ENCODE measurements at regions of chr1 and their contacts with region 1.

Region 1: DNA sequence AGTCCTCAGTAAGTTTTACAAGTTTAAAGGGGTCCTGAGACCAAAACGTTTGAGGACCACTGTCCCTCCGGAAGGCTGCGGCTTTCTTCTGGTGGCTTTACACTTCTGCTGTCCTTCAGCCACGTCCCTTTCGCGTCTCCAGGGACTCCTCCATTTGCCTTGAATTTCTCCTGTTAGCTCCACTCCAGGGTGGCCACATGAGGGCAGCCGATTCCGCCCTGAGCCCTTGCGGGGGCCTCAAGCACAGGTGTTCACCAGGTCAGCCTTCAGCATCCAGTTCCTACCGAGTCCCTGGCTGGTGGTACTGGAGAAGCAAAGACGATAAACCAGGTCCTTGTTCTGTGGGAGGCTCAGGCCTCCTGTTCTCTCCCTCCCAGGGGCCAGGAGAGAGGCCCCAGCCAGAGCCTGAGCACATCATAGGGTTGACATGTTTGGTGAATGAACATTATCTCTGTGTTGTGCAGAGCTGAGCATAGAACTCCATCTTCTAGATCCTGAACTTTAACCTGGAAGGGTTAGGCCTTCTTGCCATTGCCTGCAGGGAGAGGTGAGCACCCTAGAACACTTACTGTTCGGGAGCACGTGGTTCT is 27.4 kb upstream of the COQ8A start:
- DNase-seq: no peak
- ATAC-seq: peak; percentile 42
- H3K4me3 Mint-ChIP-seq: no peak overlapping the region
- H3K27ac Mint-ChIP-seq: no peak overlapping the region
- H3K4me1 Mint-ChIP-seq: no peaks in the 10 kb centered on the region
- H3K27me3 Mint-ChIP-seq: no peaks in the 10 kb centered on the region
- CTCF ChIP-seq: no peak

Region 2: DNA sequence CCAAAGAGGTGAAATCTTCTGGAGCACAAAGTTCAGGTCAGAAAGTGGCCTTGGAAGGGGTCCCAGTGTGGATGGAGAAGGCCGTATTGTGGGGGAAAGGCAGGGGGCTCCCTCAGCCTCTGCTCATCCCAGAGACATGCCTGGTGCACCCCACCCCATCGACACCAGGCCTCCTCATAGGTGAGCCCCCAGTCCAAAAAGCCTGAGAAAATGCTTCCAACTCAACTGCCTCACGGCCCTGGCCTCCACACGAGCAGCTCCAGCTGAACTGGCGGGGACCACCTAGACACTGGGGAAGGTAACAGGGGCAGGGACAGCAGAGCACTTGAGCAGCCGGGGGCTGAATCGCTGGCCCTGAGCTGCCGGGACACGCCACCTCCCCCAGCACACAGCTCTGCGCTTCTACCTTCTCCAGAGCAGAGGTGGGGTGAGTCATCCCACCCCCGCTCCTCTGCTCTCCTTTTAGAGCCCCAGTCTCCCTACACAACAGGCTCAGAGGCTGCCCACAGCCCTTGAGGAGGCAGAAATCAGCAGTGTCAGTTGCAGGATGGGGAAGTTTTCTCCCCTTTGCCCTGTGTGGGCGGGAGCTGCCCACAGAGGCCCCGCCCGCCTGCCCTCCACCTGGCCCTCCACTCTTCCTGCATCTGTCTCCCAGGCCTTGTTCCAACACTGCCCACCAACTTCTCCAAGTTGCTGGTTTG is 269.7 kb before region 1 on chr1:
- CTCF ChIA-PET with region 1: no interaction called
- POLR2A ChIA-PET with region 1: no interaction called
- intact Hi-C with region 1: no loop called
- DNase-seq: peak; percentile 52
- ATAC-seq: peak; percentile 63
- H3K4me3 Mint-ChIP-seq: peak overlapping the region; percentile 67
- H3K27ac Mint-ChIP-seq: peak overlapping the region; percentile 88
- H3K4me1 Mint-ChIP-seq: peaks cover 76% of the 10 kb centered on the region
- H3K27me3 Mint-ChIP-seq: no peaks in the 10 kb centered on the region
- CTCF ChIP-seq: no peak

Region 3: GRCh38 chr1:226798427-226799411 is 114.0 kb before region 1 on chr1:
- CTCF ChIA-PET with region 1: no interaction called
- POLR2A ChIA-PET with region 1: no interaction called
- intact Hi-C with region 1: no loop called
- DNase-seq: no peak
- ATAC-seq: peak; percentile 81
- H3K4me3 Mint-ChIP-seq: no peak overlapping the region
- H3K27ac Mint-ChIP-seq: peak overlapping the region; percentile 61
- H3K4me1 Mint-ChIP-seq: peaks cover 14% of the 10 kb centered on the region
- H3K27me3 Mint-ChIP-seq: no peaks in the 10 kb centered on the region
- CTCF ChIP-seq: no peak

Region 4: GRCh38 chr1:226973898-226974543 is 61.3 kb after region 1 on chr1:
- CTCF ChIA-PET with region 1: no interaction called
- POLR2A ChIA-PET with region 1: interaction called, 14 read pairs
- intact Hi-C with region 1: no loop called
- DNase-seq: no peak
- ATAC-seq: no peak
- H3K4me3 Mint-ChIP-seq: no peak overlapping the region
- H3K27ac Mint-ChIP-seq: no peak overlapping the region
- H3K4me1 Mint-ChIP-seq: peaks cover 5% of the 10 kb centered on the region
- H3K27me3 Mint-ChIP-seq: no peaks in the 10 kb centered on the region
- CTCF ChIP-seq: no peak

Region 5: DNA sequence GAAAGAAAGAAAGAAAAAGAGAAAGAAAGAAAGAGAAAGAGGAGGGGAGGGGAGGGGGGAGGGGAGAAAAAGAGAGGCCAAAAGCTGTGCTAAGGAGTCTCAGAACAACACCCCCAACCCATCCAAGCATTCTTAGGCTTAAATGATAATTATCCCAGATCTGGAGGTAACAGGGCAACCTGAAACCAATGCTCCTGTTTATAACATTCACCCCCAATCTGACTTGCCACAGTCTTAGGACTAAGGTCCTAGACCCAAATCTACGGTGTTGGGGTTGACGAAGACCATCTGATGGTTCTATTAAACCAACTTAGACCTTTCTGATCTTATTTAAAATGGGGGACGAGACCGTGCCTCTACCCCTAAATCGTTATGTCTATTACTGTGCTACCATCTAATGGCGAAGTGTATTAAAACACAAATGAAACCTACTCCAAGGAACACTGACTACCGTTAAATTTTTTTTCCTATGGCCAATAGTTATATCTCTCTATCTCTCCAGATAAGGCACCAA is 524.9 kb after region 1 on chr1:
- CTCF ChIA-PET with region 1: interaction called, 4 read pairs
- POLR2A ChIA-PET with region 1: no interaction called
- intact Hi-C with region 1: loop called (anchors 2 kb)
- DNase-seq: no peak
- ATAC-seq: no peak
- H3K4me3 Mint-ChIP-seq: no peak overlapping the region
- H3K27ac Mint-ChIP-seq: no peak overlapping the region
- H3K4me1 Mint-ChIP-seq: no peaks in the 10 kb centered on the region
- H3K27me3 Mint-ChIP-seq: peaks cover 33% of the 10 kb centered on the region
- CTCF ChIP-seq: no peak